B cell (primary cell): ENCODE measurements at regions of chr2 and their contacts with region 1.

Region 1: DNA sequence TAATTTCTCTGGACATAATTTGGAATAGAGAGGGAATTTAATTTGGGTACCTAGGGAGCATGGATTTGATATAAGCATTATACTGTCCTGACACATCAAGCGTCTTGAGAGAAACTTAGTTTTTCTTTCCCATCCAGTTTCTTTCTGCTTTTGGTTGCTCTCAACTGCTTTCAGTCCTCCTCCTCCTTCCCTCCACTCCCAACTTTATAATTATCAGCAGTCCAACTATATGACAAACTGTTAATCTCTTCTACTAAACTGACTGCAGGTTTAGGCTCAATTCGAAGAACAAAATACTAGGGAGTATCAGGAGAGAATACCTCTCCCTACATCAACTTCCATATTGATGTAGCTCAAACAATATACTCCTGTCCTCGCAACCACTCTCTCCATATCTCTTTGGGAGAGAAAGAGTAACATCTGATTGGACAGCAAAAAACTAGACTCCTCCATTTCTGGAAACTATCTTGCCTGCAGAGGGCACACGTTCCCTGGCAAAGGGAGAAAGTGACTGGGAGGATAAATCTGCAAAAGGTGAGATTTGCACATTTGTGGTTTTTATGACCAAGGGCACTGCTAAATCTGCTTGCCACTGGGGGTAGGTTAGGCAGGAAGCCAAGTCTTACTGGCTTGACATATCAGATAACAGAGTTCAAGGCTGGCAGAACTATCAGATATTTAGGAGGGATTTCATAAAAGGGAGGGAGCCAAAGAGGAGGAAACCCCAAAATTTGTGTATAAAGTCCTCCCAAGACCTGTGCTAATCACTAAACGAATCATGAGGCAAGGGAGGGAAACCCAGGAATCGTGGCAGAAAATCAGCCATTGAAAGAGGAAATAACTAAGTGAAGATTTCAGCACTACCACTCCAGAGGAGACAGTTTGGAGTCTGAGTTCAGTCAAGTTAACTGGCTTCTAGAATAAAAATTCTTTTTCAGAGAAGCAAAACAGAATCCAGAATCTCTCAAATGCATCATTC is 40.0 kb downstream of the ICA1L start:
- DNase-seq: peak; percentile 45
- ATAC-seq: peak; percentile 49
- H3K4me3 ChIP-seq: no peak overlapping the region
- H3K4me3 Mint-ChIP-seq: no peak overlapping the region
- H3K27ac ChIP-seq: no peak overlapping the region
- H3K27ac Mint-ChIP-seq: no peak overlapping the region
- H3K4me1 ChIP-seq: peaks cover 4 to 8% of the 10 kb centered on the region in 2 donors
- H3K4me1 Mint-ChIP-seq: peaks cover 9% of the 10 kb centered on the region
- H3K27me3 ChIP-seq: no peaks in the 10 kb centered on the region
- H3K27me3 Mint-ChIP-seq: no peaks in the 10 kb centered on the region
- CTCF ChIP-seq: peak; percentile 36

Region 2: DNA sequence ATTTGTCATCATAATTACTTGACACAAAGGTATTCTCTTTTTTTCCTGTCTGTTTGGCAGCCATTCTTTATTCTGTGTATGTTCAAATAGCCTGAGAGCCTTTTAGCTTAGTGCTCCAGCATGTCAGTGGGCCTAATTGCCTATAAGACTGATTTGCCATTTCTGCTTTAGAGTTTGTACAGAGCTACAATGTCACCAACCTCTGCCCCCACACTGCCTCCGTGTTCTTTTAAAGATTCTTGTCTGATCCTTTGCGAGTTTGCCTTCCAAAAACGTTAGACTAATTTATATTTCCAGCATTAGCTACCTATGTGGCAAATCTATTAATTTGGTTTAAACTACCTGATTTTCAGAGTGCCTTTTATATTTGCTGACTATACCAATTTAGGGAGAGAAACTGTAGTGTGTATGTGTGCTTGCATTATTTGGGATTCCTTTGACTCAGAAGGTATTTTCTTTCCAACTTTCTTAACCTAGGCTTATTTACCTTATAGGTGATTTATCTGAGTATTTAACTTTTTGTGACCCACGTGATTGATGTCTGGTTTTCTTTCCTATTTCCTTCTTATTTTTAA is 126.0 kb before region 1 on chr2:
- CTCF ChIA-PET with region 1: no interaction called
- POLR2A ChIA-PET with region 1: no interaction called
- intact Hi-C with region 1: no loop called
- DNase-seq: no peak
- ATAC-seq: no peak
- H3K4me3 ChIP-seq: no peak overlapping the region
- H3K4me3 Mint-ChIP-seq: peak overlapping the region; percentile 3
- H3K27ac ChIP-seq: peak overlapping the region in 1 of 2 donors; percentile 29
- H3K27ac Mint-ChIP-seq: peak overlapping the region; percentile 10
- H3K4me1 ChIP-seq: peaks cover 6 to 15% of the 10 kb centered on the region in 2 donors
- H3K4me1 Mint-ChIP-seq: peaks cover 51% of the 10 kb centered on the region
- H3K27me3 ChIP-seq: no peaks in the 10 kb centered on the region
- H3K27me3 Mint-ChIP-seq: no peaks in the 10 kb centered on the region
- CTCF ChIP-seq: no peak

Region 3: DNA sequence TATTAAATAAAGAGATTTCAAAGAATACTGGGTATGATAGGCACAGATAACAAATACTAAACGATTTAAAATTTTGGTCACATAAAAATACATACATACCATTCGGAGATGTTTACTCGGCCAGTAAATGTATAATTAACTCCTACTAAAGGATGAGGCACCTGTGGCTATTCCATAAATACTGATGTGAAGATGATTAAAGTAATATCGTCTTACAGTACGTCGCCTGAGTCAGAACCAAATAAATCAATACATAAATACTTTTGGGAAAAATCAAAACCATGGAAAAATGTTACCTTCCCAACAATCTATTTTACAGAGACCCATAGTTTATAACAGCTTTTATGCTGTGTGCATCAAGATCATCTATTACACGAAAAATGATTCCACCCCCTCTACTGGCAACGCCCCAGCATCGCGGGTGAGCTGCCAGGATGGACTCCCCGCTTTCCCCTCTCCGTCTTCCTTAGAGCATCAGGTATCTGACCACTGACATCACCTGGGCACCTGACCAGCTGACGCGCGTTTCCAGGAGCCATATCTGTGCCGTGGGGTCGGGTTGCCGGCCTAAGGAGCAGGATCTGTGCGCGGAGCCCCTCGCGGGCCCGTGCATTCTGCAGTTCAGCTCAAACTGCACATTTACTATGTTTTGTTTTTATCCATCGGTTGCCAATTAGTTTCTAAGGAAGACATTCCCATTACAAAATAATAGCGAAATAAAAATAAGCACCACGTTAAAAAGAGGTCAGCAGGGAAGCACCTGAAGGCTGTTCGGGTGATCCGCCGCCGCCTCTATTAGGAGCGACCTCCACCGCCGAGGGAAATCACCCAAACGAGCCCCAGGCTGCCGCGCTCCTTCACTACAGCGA is 39.1 kb after region 1 on chr2:
- CTCF ChIA-PET with region 1: interaction called, 4 read pairs
- POLR2A ChIA-PET with region 1: no interaction called
- intact Hi-C with region 1: loop called (anchors 1 kb)
- DNase-seq: peak; percentile 75
- ATAC-seq: peak; percentile 77
- H3K4me3 ChIP-seq: peak overlapping the region; percentile 46 to 75 (median 71)
- H3K4me3 Mint-ChIP-seq: peak overlapping the region; percentile 96
- H3K27ac ChIP-seq: peak overlapping the region; percentile 35 to 65
- H3K27ac Mint-ChIP-seq: peak overlapping the region; percentile 86
- H3K4me1 ChIP-seq: peaks cover 0 to 4% of the 10 kb centered on the region in 2 donors
- H3K4me1 Mint-ChIP-seq: peaks cover 6% of the 10 kb centered on the region
- H3K27me3 ChIP-seq: no peaks in the 10 kb centered on the region
- H3K27me3 Mint-ChIP-seq: no peaks in the 10 kb centered on the region
- CTCF ChIP-seq: peak; percentile 83

Region 4: DNA sequence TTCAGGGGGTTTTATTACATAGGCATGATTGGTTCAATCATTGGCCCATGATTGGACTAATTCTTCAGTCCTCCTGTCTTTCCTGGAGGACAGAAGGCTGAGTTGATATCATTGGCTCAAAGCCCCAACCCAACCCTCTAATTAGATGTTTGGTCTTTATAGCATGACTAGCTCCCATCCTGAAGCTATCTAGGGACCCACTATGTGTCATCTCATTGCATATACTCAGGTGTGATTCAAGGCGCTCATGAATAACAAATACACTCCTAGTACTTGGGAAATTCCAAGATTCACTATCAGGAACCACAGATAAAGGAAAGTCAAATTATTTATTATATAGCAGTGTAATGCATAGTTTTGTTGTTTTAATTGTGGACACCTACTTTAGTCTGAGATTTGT is 158.2 kb after region 1 on chr2:
- CTCF ChIA-PET with region 1: no interaction called
- POLR2A ChIA-PET with region 1: no interaction called
- intact Hi-C with region 1: no loop called
- DNase-seq: no peak
- ATAC-seq: no peak
- H3K4me3 ChIP-seq: no peak overlapping the region
- H3K4me3 Mint-ChIP-seq: no peak overlapping the region
- H3K27ac ChIP-seq: no peak overlapping the region
- H3K27ac Mint-ChIP-seq: no peak overlapping the region
- H3K4me1 ChIP-seq: no peaks in the 10 kb centered on the region
- H3K4me1 Mint-ChIP-seq: no peaks in the 10 kb centered on the region
- H3K27me3 ChIP-seq: no peaks in the 10 kb centered on the region
- H3K27me3 Mint-ChIP-seq: no peaks in the 10 kb centered on the region
- CTCF ChIP-seq: no peak

Region 5: DNA sequence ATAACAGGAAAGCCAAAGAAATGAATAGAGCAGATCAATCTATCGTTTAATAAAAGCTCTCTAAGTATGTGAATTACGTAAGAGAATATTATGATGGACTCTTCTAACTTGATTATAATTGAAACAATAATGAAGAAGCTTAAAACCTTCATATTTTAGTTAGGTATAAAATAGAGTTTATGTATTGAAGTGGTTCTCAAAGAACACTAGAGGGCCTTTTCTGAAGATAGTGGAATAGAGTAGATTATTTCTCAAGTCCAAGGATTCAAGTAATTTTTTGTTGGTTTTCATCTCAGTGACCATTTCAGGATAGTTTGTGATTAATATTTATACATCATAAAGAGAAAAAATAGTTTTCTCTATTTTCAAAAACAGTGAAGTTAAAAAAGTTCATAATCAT is 280.8 kb after region 1 on chr2:
- CTCF ChIA-PET with region 1: no interaction called
- POLR2A ChIA-PET with region 1: no interaction called
- intact Hi-C with region 1: no loop called
- DNase-seq: no peak
- ATAC-seq: no peak
- H3K4me3 ChIP-seq: no peak overlapping the region
- H3K4me3 Mint-ChIP-seq: no peak overlapping the region
- H3K27ac ChIP-seq: no peak overlapping the region
- H3K27ac Mint-ChIP-seq: no peak overlapping the region
- H3K4me1 ChIP-seq: no peaks in the 10 kb centered on the region
- H3K4me1 Mint-ChIP-seq: no peaks in the 10 kb centered on the region
- H3K27me3 ChIP-seq: no peaks in the 10 kb centered on the region
- H3K27me3 Mint-ChIP-seq: no peaks in the 10 kb centered on the region
- CTCF ChIP-seq: no peak